Activated CD4-positive, alpha-beta memory T cell treated with anti-CD3 and anti-CD28 coated beads, Interleukin-2, amount 10 ng/mL, durations not matched to agents 7 days and 5 days (primary cell): ENCODE measurements at regions of chr12 and their contacts with region 1.

Region 1: DNA sequence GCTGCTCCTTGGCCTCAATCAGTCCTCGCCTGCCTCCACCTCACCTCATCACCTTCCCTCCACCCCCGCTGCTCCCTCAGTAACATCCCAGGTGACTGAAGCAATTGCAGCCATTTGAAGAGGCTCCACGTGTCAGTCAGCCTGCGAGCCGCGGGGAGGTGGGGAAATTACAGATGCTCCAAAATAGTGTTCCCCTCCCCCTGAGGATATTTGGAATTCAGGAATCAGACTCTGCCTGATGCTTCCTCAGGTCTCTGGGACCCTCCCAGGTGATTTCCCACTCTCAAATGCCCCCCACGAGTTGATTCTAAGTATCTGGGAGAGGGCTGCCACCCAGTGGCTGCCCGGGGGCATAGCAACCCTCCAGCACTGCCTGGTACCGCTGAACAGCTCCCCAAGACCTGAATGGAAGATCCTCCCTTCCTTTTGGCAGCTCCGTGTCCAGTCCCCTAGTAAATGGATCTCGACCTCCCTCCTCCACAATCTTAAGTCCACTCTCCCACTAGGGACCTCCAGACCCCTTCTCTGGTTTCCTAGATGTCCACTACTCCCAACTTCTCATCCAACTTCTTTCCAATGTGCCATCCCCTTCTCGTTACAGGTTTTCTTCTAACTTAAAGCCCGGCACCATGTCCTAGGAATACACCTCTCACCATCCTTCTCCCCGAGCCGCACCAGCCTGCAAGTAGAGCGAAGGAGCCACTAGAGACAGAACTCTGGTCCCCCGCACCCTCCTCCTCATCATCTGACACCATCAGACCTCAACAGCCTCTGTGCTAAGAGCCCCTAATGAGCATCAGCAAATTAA is 1.4 kb upstream of the ASIC1 start:
- DNase-seq: peak; percentile 56
- H3K4me3 Mint-ChIP-seq: peak overlapping the region; percentile 25
- H3K27ac Mint-ChIP-seq: no peak overlapping the region
- H3K4me1 Mint-ChIP-seq: peaks cover 28% of the 10 kb centered on the region
- H3K27me3 Mint-ChIP-seq: peaks cover 58% of the 10 kb centered on the region

Region 2: GRCh38 chr12:50032639-50033581 is 23.1 kb before region 1 on chr12:
- CTCF ChIA-PET with region 1: interaction called, 78 read pairs
- POLR2A ChIA-PET with region 1: interaction called, 3 read pairs
- DNase-seq: no peak
- H3K4me3 Mint-ChIP-seq: no peak overlapping the region
- H3K27ac Mint-ChIP-seq: no peak overlapping the region
- H3K4me1 Mint-ChIP-seq: no peaks in the 10 kb centered on the region
- H3K27me3 Mint-ChIP-seq: peaks cover 23% of the 10 kb centered on the region

Region 3: GRCh38 chr12:50043854-50044253 is 12.2 kb before region 1 on chr12:
- CTCF ChIA-PET with region 1: interaction called, 78 read pairs
- POLR2A ChIA-PET with region 1: interaction called, 8 read pairs
- DNase-seq: no peak
- H3K4me3 Mint-ChIP-seq: no peak overlapping the region
- H3K27ac Mint-ChIP-seq: no peak overlapping the region
- H3K4me1 Mint-ChIP-seq: peaks cover 15% of the 10 kb centered on the region
- H3K27me3 Mint-ChIP-seq: peaks cover 9% of the 10 kb centered on the region

Region 4: DNA sequence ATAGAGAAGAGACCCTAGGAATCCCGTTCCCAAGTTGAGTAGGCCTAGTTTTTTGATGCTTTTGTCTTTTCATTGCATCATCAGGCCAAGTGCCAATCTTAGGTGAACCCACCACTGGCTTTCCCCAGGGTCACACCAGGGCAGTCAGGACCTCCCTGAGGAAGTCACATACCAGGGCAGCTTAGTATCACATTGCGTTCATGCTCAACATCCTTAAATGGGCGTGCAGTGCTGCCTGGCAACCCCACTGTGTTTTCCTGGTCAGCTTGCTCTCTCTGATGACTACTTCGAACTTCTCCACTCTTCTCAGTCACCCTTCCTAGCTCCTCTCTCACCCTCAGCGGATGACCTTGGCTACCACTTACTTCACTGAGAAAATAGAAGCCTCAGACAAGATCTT is 10.4 kb after region 1 on chr12:
- CTCF ChIA-PET with region 1: interaction called, 41 read pairs
- POLR2A ChIA-PET with region 1: no interaction called
- DNase-seq: no peak
- H3K4me3 Mint-ChIP-seq: no peak overlapping the region
- H3K27ac Mint-ChIP-seq: no peak overlapping the region
- H3K4me1 Mint-ChIP-seq: peaks cover 6% of the 10 kb centered on the region
- H3K27me3 Mint-ChIP-seq: peaks cover 11% of the 10 kb centered on the region

Region 5: DNA sequence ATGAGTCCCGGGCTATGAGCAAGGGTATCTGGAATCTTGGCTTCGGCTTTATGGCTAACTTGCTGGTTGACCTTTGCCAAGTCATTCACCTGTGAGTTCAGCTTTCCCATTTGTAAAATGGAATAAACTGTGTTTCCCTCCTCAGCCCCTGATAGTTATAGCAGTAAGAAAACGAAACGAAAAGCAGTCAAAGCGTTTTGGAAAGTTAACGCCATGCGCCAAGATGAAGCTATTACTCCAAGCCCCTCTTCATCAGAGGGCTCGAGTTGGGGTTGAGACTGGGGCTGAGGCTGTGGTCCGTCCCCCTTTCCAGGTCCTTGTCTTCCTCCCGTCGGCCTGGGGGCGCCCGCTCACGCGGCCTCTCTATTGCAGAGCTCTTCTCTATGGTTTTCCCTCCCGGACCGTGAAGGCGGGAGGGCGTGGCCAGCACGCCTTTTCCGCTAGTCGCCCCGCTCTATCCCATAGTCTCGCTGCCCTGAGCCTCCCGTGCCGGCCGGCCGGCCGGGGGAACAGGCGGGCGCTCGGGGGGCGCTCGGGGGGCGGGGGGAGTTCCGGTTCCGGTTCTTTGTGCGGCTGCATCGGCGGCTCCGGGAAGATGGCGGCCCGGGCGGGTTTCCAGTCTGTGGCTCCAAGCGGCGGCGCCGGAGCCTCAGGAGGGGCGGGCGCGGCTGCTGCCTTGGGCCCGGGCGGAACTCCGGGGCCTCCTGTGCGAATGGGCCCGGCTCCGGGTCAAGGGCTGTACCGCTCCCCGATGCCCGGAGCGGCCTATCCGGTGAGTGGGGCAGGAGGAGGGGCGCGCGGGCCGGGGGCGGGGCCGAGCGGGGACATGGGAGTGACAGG is 29.0 kb after region 1 on chr12 and contains the start of gene SMARCD1:
- CTCF ChIA-PET with region 1: interaction called, 14 read pairs
- POLR2A ChIA-PET with region 1: interaction called, 5 read pairs
- DNase-seq: peak; percentile 83
- H3K4me3 Mint-ChIP-seq: peak within 1 kb of the TSS; percentile 88
- H3K27ac Mint-ChIP-seq: peak within 1 kb of the TSS; percentile 88
- H3K4me1 Mint-ChIP-seq: peaks cover 41% of the 10 kb centered on the region
- H3K27me3 Mint-ChIP-seq: no peaks in the 10 kb centered on the region
- total RNA-seq, gene SMARCD1: 57.3 to 63.3 TPM